Endothelial cell of umbilical vein (primary cell): ENCODE measurements at regions of chr6 and their contacts with region 1.

Region 1: GRCh38 chr6:169701954-169702839 is at the starts of genes C6orf120 and WDR27:
- DNase-seq: peak; percentile 97
- H3K4me3 ChIP-seq: peak within 1 kb of the TSS; percentile 70 to 84 (median 71)
- H3K27ac ChIP-seq: peak within 1 kb of the TSS; percentile 76
- H3K4me1 ChIP-seq: peaks cover 57% of the 10 kb centered on the region
- H3K27me3 ChIP-seq: no peaks in the 10 kb centered on the region
- CTCF ChIP-seq: no peak
- POLR2A ChIP-seq: peak; percentile 78
- total RNA-seq, gene C6orf120: 28.2 and 30.1 TPM in 2 replicates
- total RNA-seq, gene WDR27: 69.7 and 75.2 TPM in 2 replicates

Region 2: DNA sequence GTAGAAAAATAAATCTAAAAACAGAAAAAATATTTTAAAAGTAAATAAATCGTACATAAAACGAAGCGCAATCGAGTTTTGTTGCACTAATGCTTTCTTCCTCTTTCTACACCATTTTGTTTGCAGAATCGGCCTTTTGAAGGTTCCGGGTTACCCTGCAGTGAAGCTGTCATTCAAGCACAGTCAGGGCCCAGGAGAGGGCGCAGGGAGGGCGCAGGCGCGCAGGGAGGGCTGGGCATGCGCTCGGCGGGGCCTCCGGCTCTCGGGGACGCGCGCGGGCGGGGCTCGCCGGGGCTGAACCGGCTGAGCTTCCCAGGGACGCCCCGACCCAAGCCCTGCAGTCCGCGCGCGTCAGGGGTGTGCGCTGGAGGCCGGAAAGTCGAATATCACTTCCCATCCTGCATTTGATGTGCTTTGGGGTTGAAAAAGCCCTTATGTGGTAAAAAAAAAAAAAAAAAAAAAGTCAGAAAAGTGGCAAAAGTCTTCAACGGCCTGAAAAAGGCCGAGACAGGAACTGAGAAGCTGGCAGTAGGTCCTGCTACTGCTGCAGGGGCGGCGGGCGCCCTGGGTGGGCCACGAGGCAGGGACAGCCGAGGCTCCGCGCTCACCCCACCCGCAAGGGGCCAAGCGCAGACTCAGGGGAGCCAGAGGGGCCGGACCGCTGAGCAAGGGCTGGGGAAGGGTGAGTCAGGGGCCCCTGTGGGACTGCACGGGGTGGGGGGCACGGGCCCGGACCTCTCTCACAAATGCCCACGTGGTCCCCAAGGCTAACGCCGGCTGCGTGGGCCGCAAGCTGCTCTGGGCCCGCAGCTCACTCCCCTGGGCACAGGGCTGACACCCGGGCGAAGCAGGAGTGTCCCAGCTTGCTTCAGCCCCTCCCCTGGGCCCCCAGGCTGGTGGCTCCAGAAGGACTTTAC is 489.0 kb before region 1 on chr6:
- CTCF ChIA-PET with region 1: no interaction called
- POLR2A ChIA-PET with region 1: no interaction called
- dilution Hi-C with region 1: no loop called
- intact Hi-C with region 1: loop called (anchors 1 kb)
- DNase-seq: peak; percentile 83
- H3K4me3 ChIP-seq: peak overlapping the region in 2 of 3 experiments; percentile 4 to 30
- H3K27ac ChIP-seq: peak overlapping the region; percentile 32
- H3K4me1 ChIP-seq: peaks cover 5% of the 10 kb centered on the region
- H3K27me3 ChIP-seq: no peaks in the 10 kb centered on the region
- CTCF ChIP-seq: peak; percentile 12 to 43
- POLR2A ChIP-seq: peak; percentile 21

Region 3: DNA sequence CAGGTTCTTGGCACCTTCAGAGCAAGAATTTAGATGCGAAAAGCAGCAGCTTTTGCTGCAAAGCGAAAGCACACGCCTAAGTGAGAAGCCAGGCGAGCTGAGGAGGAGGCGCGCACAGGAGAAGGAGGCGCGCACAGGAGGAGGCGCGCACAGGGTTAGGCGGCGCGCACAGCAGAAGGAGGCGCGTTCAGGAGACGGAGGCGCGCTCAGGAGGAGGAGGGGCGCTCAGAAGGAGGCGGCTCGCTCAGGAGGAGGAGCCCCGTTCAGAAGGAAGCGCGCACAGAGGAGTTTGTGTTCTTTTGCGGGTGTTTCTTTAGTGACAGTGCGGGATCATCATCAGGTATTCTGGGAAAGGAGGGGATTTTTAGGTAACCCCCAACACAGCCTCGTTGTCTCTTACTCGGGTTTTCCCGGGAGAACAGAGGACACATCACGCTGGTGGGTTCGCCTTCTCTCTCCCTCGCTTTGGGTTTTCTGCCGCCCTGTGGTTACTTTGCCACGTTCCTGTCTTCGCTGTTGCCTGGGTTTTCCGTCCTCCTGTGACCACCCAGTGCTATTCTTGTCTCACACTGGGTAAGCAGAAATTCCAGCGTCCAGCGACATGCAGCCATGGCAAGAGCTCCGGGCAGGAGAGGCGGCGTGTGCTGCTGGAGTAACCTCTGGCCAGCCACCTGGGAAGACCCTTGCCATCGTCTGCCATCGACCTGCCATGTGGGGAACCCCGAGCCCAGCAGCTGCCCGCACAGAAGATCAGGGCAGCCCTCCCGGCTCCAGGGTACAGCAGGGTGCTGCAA is 47.4 kb before region 1 on chr6:
- CTCF ChIA-PET with region 1: interaction called, 5 read pairs
- POLR2A ChIA-PET with region 1: interaction called, 3 read pairs
- dilution Hi-C with region 1: no loop called
- intact Hi-C with region 1: loop called (anchors 1 kb)
- DNase-seq: peak; percentile 83
- H3K4me3 ChIP-seq: peak overlapping the region in 2 of 3 experiments; percentile 25 to 41
- H3K27ac ChIP-seq: peak overlapping the region; percentile 6
- H3K4me1 ChIP-seq: no peaks in the 10 kb centered on the region
- H3K27me3 ChIP-seq: no peaks in the 10 kb centered on the region
- CTCF ChIP-seq: peak in 1 of 2 donors; percentile 34
- POLR2A ChIP-seq: peak; percentile 25

Region 4: DNA sequence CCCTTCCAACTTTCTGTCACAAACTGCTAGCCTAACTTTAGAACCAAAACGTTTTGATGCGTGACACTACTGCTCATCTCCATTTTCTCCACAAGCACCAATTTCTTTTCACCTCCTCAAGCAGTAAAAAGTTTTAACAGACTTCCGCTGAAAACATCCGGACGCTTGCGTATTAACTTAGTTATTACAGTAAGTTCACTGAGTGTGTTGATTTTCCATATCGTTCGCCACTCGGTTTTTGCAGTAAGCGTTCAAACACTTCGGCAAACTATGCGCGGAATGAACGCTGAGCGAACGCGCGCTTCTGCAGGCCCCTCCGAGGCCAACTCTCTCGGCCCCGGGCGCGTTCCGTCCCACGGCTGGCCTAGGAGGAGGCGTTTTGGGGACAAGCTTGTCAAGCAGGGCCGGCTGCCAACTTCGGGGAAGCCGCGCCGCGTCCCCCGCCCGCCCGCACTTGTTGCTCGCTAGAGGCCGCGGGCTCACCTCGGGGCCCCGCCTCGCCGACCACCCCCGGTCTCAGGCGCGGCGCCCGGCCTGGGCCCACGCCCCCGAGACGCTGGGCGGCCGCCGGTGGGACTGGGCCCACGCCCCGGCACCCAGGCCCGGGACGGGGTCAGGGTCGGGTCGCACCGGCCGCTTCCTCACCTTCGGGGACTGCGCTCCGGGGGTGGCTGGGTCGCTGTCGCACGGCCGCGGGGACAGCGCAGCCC is 21.2 kb after region 1 on chr6:
- CTCF ChIA-PET with region 1: interaction called, 18 read pairs
- POLR2A ChIA-PET with region 1: interaction called, 3 read pairs
- dilution Hi-C with region 1: no loop called
- intact Hi-C with region 1: loop called (anchors 1 kb)
- DNase-seq: peak; percentile 72
- H3K4me3 ChIP-seq: peak overlapping the region; percentile 25 to 95 (median 71)
- H3K27ac ChIP-seq: peak overlapping the region; percentile 77
- H3K4me1 ChIP-seq: peaks cover 30% of the 10 kb centered on the region
- H3K27me3 ChIP-seq: no peaks in the 10 kb centered on the region
- CTCF ChIP-seq: no peak
- POLR2A ChIP-seq: no peak

Region 5: DNA sequence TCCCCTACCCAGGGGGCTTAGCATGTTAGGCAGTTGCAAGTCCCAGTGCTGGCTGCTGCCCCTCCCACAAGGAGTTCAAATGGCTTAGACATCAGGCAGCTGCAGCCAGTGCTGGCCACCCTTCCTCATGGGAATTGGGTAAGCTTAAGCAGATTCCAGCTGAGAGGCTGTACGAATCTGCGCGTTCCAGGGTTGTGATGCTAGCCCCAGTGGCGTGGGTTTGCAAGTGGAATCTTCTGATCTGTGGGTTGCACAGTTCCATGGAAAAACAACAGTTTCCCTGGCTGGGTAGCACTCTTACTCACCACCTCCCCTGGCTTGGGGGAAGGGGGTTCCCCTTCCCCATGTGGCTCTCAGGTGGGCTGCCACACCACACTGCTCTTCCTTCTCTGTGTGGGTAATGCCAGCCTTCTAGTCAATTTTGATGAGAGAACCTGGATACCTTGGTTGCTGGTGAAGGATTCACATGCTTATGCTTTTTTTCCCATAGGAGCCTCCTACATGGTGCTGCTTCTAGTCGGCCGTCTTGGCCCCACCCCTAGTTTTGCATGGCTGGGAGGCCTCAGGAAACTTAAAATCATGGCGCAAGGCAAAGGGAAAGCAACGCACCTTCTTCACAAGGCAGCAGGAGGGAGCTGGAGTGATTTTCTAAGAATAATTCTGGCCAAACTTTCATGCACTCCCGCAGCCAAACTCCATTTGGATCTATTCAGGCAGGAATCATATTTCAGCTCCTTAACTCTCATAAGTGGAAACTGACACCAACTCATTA is 36.2 kb after region 1 on chr6:
- CTCF ChIA-PET with region 1: no interaction called
- POLR2A ChIA-PET with region 1: no interaction called
- dilution Hi-C with region 1: no loop called
- intact Hi-C with region 1: no loop called
- DNase-seq: no peak
- H3K4me3 ChIP-seq: no peak overlapping the region
- H3K27ac ChIP-seq: no peak overlapping the region
- H3K4me1 ChIP-seq: no peaks in the 10 kb centered on the region
- H3K27me3 ChIP-seq: peaks cover 0 to 8% of the 10 kb centered on the region in 2 experiments
- CTCF ChIP-seq: no peak
- POLR2A ChIP-seq: no peak

Region 6: DNA sequence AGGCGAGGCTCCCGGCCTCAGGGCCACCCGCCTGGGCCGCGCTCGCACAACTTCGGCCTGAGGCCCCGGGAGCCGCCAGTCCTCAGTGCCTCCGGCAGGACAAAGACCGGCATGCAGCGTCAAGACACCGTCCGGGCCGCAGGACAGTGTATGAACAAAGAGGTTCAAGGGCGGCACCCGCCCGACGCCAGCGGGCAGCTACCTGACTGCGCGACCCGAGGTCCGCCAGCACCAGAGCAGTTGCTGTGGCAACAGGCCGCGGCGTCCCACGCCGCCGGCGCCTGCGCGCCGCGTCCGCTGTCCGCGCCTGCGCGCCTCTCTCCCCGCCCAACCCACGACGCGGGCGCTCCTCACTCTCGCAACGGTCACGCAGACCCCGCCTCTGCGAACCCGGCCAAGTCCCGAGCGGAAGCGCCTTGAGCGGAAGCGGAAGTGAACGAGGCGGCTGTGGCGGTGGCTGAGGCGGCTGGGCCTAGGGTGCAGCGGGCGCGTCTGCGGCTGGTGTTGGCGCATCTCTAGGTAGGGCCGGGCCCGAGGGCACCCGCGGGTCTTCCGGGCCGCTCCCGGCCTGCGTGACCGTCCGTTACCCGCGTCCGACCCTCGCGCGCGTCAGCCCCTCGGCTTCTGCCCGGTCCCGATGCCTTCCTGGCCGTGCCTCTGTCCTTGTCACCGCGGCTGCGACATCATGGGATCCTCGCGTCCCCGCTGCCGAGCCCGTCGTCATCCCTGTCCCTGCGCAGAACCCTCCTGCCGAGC is 604.3 kb after region 1 on chr6 and contains the start of gene FAM120B:
- CTCF ChIA-PET with region 1: no interaction called
- POLR2A ChIA-PET with region 1: no interaction called
- dilution Hi-C with region 1: no loop called
- intact Hi-C with region 1: loop called (anchors 5 kb)
- DNase-seq: peak; percentile 96
- H3K4me3 ChIP-seq: peak within 1 kb of the TSS; percentile 48 to 86 (median 78)
- H3K27ac ChIP-seq: peak within 1 kb of the TSS; percentile 73
- H3K4me1 ChIP-seq: peaks cover 11% of the 10 kb centered on the region
- H3K27me3 ChIP-seq: no peaks in the 10 kb centered on the region
- CTCF ChIP-seq: no peak
- POLR2A ChIP-seq: peak; percentile 97
- total RNA-seq, gene FAM120B: 28.1 and 28.2 TPM in 2 replicates